Activated B cell treated with CpG ODN at 0.5 μM for 24 hours (primary cell): ENCODE measurements at regions of chr11 and their contacts with region 1.

Region 1: DNA sequence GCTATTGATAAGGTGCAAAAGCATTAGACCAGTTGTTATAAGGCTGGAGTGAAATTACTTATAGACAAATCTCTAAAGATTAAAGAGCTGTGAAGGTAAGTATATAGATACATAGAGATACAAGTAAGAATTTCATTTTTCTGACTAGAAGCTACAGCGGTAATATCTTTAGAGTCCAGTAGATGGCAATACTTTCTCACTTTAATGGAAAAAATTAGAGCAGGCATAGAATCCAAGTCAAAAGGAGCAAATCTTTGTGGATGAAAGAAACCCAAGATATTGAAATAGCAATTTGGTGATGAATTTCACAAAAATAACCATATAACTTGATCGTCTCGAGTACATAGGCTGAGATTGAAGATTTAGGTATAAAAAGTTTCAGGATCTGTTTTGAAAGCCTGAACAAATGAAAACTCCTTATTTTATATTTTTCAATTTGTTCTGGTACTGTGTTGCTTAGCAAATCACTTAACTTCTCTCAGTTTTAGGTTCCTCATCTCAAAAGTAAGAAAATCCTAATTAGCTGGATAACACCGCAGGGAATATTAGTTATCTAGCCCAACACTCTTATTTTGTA is 81.9 kb downstream of the UVRAG start:
- DNase-seq: no peak
- ATAC-seq: no peak
- H3K4me3 Mint-ChIP-seq: no peak overlapping the region
- H3K27ac Mint-ChIP-seq: no peak overlapping the region
- H3K4me1 Mint-ChIP-seq: peaks cover 60% of the 10 kb centered on the region
- H3K27me3 Mint-ChIP-seq: no peaks in the 10 kb centered on the region
- CTCF ChIP-seq: no peak

Region 2: GRCh38 chr11:75445315-75445953 is 451.5 kb before region 1 on chr11:
- CTCF ChIA-PET with region 1: no interaction called
- POLR2A ChIA-PET with region 1: no interaction called
- intact Hi-C with region 1: no loop called
- DNase-seq: peak; percentile 69
- ATAC-seq: peak; percentile 98
- H3K4me3 Mint-ChIP-seq: no peak overlapping the region
- H3K27ac Mint-ChIP-seq: no peak overlapping the region
- H3K4me1 Mint-ChIP-seq: no peaks in the 10 kb centered on the region
- H3K27me3 Mint-ChIP-seq: no peaks in the 10 kb centered on the region
- CTCF ChIP-seq: no peak

Region 3: GRCh38 chr11:75721855-75722668 is 174.9 kb before region 1 on chr11:
- CTCF ChIA-PET with region 1: no interaction called
- POLR2A ChIA-PET with region 1: interaction called, 21 read pairs
- intact Hi-C with region 1: no loop called
- DNase-seq: no peak
- ATAC-seq: no peak
- H3K4me3 Mint-ChIP-seq: no peak overlapping the region
- H3K27ac Mint-ChIP-seq: no peak overlapping the region
- H3K4me1 Mint-ChIP-seq: no peaks in the 10 kb centered on the region
- H3K27me3 Mint-ChIP-seq: no peaks in the 10 kb centered on the region
- CTCF ChIP-seq: no peak

Region 4: GRCh38 chr11:75826461-75827230 is 70.3 kb before region 1 on chr11:
- CTCF ChIA-PET with region 1: no interaction called
- POLR2A ChIA-PET with region 1: interaction called, 19 read pairs
- intact Hi-C with region 1: no loop called
- DNase-seq: no peak
- ATAC-seq: no peak
- H3K4me3 Mint-ChIP-seq: peak overlapping the region; percentile 63
- H3K27ac Mint-ChIP-seq: peak overlapping the region; percentile 76
- H3K4me1 Mint-ChIP-seq: peaks cover 87% of the 10 kb centered on the region
- H3K27me3 Mint-ChIP-seq: no peaks in the 10 kb centered on the region
- CTCF ChIP-seq: no peak

Region 5: DNA sequence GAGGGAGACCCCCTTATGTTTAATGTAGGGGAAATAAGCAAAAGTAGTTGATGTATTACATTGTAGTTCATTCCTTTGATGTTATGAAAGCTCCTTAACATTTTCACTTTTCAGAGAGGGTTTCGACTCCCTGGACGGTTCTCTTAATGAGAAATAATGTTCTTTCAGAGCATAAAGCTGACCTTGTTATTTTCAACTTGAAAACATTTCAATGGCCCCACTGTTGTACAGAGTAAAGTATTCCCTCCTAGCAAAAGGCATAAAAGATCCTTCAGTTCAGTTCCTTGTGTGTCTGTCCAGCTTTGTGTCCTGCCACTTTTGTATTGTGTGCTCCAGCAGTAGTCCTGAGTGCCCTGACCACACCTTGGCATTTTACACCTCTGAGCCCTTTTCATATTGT is 18.0 kb before region 1 on chr11:
- CTCF ChIA-PET with region 1: interaction called, 10 read pairs
- POLR2A ChIA-PET with region 1: interaction called, 16 read pairs
- intact Hi-C with region 1: no loop called
- DNase-seq: no peak
- ATAC-seq: no peak
- H3K4me3 Mint-ChIP-seq: no peak overlapping the region
- H3K27ac Mint-ChIP-seq: peak overlapping the region; percentile 16
- H3K4me1 Mint-ChIP-seq: peaks cover 40% of the 10 kb centered on the region
- H3K27me3 Mint-ChIP-seq: no peaks in the 10 kb centered on the region
- CTCF ChIP-seq: no peak

Region 6: GRCh38 chr11:76207642-76208401 is 310.9 kb after region 1 on chr11:
- CTCF ChIA-PET with region 1: interaction called, 19 read pairs
- POLR2A ChIA-PET with region 1: interaction called, 4 read pairs
- intact Hi-C with region 1: loop called (anchors 2 kb)
- DNase-seq: peak; percentile 80
- ATAC-seq: peak; percentile 76
- H3K4me3 Mint-ChIP-seq: peak overlapping the region; percentile 86
- H3K27ac Mint-ChIP-seq: no peak overlapping the region
- H3K4me1 Mint-ChIP-seq: peaks cover 23% of the 10 kb centered on the region
- H3K27me3 Mint-ChIP-seq: peaks cover 40% of the 10 kb centered on the region
- CTCF ChIP-seq: peak; percentile 78

Region 7: DNA sequence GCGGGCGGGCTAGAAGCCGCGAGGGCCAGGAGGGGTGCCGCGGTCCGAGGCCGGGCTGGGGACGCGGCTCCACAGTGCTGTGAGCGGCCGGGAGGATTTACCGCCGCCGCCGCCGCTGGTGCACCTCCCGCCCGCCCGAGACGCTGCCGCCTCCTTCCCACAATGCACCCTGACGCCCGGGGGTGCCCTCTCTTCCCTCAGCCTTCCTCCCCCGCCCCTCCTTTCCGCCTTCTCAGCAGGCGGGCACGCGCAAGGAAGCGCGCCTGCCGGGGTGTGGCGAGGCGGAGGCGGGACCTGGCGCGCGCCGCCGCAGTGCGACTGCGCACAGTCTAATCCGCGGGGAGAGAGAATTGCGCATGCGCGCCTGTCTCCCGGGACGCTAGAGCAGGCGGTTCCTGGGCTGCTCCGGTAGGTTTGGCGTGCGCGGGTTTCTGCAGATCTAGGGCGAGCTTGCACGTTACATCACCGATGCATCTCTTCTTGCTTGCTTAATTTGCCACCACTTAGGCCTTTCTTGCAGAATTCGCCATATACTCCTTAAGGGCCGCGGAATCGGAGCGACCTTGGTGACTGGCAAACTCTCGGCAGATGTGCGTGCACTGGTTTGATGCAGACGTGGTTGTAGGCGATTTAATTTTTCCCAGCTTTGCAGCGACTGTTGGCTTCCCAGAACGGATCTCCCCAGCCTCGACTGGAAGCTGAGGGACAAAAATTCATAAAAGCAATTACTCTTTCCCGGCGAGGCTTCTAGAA is 484.2 kb after region 1 on chr11 and contains the starts of genes GVQW3 and THAP12:
- CTCF ChIA-PET with region 1: no interaction called
- POLR2A ChIA-PET with region 1: no interaction called
- intact Hi-C with region 1: loop called (anchors 5 kb)
- DNase-seq: peak; percentile 97
- ATAC-seq: peak; percentile 87
- H3K4me3 Mint-ChIP-seq: peak within 1 kb of the TSS; percentile 94
- H3K27ac Mint-ChIP-seq: peak within 1 kb of the TSS; percentile 88
- H3K4me1 Mint-ChIP-seq: peaks cover 63% of the 10 kb centered on the region
- H3K27me3 Mint-ChIP-seq: no peaks in the 10 kb centered on the region
- CTCF ChIP-seq: no peak
- total RNA-seq, gene GVQW3: 2.6 and 3.0 TPM in 2 replicates
- total RNA-seq, gene THAP12: 56.5 and 60.2 TPM in 2 replicates

Region 8: GRCh38 chr11:76670485-76671236 is 773.7 kb after region 1 on chr11 and contains the start of gene LRRC32:
- CTCF ChIA-PET with region 1: no interaction called
- POLR2A ChIA-PET with region 1: no interaction called
- intact Hi-C with region 1: loop called (anchors 10 kb)
- DNase-seq: no peak
- ATAC-seq: no peak
- H3K4me3 Mint-ChIP-seq: peak within 1 kb of the TSS; percentile 86
- H3K27ac Mint-ChIP-seq: peak within 1 kb of the TSS; percentile 76
- H3K4me1 Mint-ChIP-seq: peaks cover 89% of the 10 kb centered on the region
- H3K27me3 Mint-ChIP-seq: peaks cover 24% of the 10 kb centered on the region
- CTCF ChIP-seq: no peak
- total RNA-seq, gene LRRC32: 25.8 and 27.8 TPM in 2 replicates